PC-9 (cell line): ENCODE measurements at regions of chr2 and their contacts with region 1.

Region 1: GRCh38 chr2:170739048-170739447 is 23.9 kb downstream of the SP5 start:
- DNase-seq: peak; percentile 40 to 98
- H3K4me3 ChIP-seq: no peak overlapping the region
- H3K27ac ChIP-seq: peak overlapping the region; percentile 88
- H3K4me1 ChIP-seq: peaks cover 20% of the 10 kb centered on the region
- H3K27me3 ChIP-seq: no peaks in the 10 kb centered on the region
- CTCF ChIP-seq: no peak

Region 2: GRCh38 chr2:170446082-170446481 is 293.0 kb before region 1 on chr2:
- CTCF ChIA-PET with region 1: no interaction called
- POLR2A ChIA-PET with region 1: no interaction called
- intact Hi-C with region 1: loop called (anchors 10 kb)
- DNase-seq: peak; percentile 49 to 91
- H3K4me3 ChIP-seq: no peak overlapping the region
- H3K27ac ChIP-seq: peak overlapping the region; percentile 41
- H3K4me1 ChIP-seq: peaks cover 41% of the 10 kb centered on the region
- H3K27me3 ChIP-seq: no peaks in the 10 kb centered on the region
- CTCF ChIP-seq: no peak

Region 3: DNA sequence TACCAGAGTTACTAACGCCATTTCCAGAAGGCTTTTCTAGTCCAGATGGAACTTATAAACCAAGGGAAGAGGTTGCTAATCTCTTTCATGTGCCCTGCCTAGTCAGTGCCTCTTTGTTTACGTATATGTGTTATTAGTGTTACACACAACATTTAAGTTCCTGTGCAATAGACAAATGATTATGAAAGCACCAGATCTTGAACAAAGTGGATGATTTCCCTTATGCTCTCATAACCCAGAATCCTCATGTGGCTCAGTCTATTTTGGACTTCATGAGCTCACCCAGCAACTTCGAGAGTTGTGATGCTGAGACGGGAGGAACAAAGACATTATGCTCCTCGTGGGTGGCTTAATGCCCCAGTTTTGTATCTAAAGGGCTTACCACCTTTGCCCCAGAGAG is 238.3 kb before region 1 on chr2:
- CTCF ChIA-PET with region 1: interaction called, 14 read pairs
- POLR2A ChIA-PET with region 1: no interaction called
- intact Hi-C with region 1: no loop called
- DNase-seq: no peak
- H3K4me3 ChIP-seq: no peak overlapping the region
- H3K27ac ChIP-seq: no peak overlapping the region
- H3K4me1 ChIP-seq: no peaks in the 10 kb centered on the region
- H3K27me3 ChIP-seq: no peaks in the 10 kb centered on the region
- CTCF ChIP-seq: no peak

Region 4: DNA sequence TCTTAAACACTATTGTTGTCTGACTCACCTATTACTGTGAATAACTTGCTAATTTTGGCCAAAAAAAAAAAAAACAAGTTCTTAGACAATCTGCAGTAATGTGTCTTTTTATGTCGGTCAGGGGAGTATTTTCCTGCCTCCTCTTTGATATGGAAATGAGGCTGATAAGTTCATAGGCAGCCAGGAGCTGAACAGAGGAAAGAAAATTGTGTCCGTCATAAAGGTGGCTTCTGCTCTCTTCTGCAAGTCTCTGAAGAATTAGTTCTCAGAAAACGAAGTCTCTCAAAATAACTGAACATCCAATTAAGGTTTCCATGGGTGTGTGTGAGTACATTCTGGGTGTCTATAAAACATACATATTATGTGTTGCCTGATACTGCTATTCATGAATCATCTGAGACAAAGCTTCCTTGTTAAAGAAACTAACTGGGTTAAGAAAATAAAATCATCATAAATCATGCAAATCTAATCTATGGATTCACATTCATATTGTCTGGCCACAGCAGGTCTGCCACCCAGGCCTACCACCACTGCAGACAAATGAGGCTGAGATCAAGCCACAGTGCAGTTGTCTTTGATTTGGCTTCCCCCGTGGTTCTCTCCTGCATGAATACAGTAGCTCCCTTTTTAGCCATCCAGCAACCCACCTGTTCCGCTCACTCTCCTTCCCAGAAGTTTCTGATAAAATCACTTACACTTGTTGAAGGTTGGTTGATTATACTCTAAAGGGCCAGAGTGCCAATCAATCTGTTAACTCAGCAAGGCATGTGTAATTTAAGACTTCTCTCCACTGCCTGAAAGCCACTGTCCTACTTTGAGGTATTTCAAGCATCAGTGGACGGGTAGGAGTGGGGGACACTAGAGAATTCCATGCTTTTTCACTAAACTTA is 43.3 kb before region 1 on chr2:
- CTCF ChIA-PET with region 1: no interaction called
- POLR2A ChIA-PET with region 1: no interaction called
- intact Hi-C with region 1: no loop called
- DNase-seq: no peak
- H3K4me3 ChIP-seq: no peak overlapping the region
- H3K27ac ChIP-seq: no peak overlapping the region
- H3K4me1 ChIP-seq: no peaks in the 10 kb centered on the region
- H3K27me3 ChIP-seq: no peaks in the 10 kb centered on the region
- CTCF ChIP-seq: no peak

Region 5: GRCh38 chr2:170770606-170771420 is 31.8 kb after region 1 on chr2:
- CTCF ChIA-PET with region 1: no interaction called
- POLR2A ChIA-PET with region 1: interaction called, 12 read pairs
- intact Hi-C with region 1: loop called (anchors 1 kb)
- DNase-seq: peak; percentile 79 to 82
- H3K4me3 ChIP-seq: peak overlapping the region; percentile 74
- H3K27ac ChIP-seq: peak overlapping the region; percentile 58
- H3K4me1 ChIP-seq: no peaks in the 10 kb centered on the region
- H3K27me3 ChIP-seq: no peaks in the 10 kb centered on the region
- CTCF ChIP-seq: no peak

Region 6: DNA sequence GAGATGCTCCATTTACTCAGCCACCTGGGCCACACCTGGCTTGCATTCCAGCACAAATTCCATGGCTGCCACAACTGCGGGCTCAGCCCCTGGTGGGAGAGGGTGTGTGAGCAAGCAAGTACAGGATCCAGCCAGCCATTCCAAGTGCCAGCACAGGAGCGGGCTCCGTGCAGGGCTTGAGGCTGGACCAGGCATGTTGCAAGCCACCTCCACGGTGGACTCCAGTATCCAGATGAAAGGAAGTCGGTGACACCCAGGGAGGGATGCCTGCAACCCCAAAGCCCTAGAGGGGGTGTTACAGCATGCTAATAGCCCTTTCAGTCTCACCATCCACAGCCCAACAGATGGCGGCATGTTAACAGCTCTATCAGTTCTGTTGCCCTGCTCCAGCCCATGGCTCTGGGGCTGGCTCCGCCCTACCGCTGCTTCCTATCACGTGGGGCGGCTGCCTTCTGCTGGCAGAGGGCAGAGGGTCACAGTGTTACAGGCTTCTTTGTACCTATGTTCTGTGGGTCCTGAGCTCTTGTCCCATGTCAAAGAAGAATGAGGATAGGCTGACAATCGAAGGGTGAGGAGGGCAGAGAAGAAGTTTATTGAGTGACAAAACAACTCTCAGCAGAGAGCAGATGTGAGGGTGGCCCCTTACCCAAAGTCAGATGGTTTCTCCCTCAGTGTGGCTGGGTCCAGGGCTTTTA is 178.3 kb after region 1 on chr2:
- CTCF ChIA-PET with region 1: no interaction called
- POLR2A ChIA-PET with region 1: no interaction called
- intact Hi-C with region 1: no loop called
- DNase-seq: peak in 1 of 2 experiments; percentile 8
- H3K4me3 ChIP-seq: no peak overlapping the region
- H3K27ac ChIP-seq: no peak overlapping the region
- H3K4me1 ChIP-seq: no peaks in the 10 kb centered on the region
- H3K27me3 ChIP-seq: no peaks in the 10 kb centered on the region
- CTCF ChIP-seq: no peak

Region 7: GRCh38 chr2:171389325-171389724 is 650.3 kb after region 1 on chr2:
- CTCF ChIA-PET with region 1: no interaction called
- POLR2A ChIA-PET with region 1: no interaction called
- intact Hi-C with region 1: no loop called
- DNase-seq: no peak
- H3K4me3 ChIP-seq: no peak overlapping the region
- H3K27ac ChIP-seq: no peak overlapping the region
- H3K4me1 ChIP-seq: peaks cover 37% of the 10 kb centered on the region
- H3K27me3 ChIP-seq: no peaks in the 10 kb centered on the region
- CTCF ChIP-seq: no peak

Region 8: DNA sequence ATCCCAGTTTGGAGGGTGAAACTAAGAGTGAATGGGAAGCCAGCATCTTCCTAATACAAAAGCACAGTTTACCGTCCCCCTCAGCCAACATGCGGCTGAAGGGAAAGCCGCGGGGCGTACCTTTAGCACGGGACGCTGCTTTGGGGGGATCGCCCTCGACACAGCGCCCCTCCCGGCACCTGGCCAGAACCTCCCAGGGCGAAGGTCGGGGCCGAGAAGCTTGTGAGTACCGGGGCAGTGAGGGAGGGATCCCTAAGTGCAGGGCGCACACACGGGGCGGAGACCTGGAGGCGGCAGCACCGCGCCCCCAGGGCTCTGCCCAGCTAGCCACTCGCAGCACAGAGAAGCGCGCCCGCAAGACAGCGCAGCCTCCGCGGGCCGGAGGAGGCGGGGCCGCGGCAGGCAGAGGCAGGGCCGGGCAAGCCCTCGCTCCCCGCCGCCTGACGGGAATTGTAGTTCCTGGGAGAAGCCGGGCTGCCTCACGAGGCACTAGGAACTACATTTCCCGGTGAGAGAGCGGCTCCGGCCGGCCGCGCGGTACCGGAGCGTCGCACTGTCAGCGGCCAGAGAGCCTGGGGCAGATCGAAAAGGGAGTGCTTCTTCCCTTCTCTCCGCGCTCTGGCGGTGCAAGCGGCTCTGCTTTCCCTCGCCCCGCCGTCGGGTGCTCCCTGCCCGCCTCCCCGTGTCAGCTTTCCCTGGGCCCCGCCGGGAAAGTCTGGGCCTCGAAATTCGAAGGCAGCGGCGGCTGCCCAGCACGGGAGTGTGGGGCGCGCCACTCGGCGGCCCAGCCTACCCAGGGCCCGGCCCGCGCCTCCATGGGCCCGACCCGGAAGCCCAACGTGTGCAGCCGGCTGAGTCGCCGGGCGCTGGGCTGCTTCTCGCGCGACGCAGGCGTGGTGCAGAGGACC is 695.0 kb after region 1 on chr2 and contains the starts of genes DCAF17 and METTL8:
- CTCF ChIA-PET with region 1: no interaction called
- POLR2A ChIA-PET with region 1: interaction called, 10 read pairs
- intact Hi-C with region 1: no loop called
- DNase-seq: peak; percentile 95 to 98
- H3K4me3 ChIP-seq: peak within 1 kb of the TSS; percentile 64
- H3K27ac ChIP-seq: peak within 1 kb of the TSS; percentile 93
- H3K4me1 ChIP-seq: peaks cover 25% of the 10 kb centered on the region
- H3K27me3 ChIP-seq: no peaks in the 10 kb centered on the region
- CTCF ChIP-seq: peak; percentile 50
- total RNA-seq, gene DCAF17: 22.0 and 22.1 TPM in 2 replicates
- total RNA-seq, gene METTL8: 21.8 and 24.3 TPM in 2 replicates